Caco-2 (cell line): ENCODE measurements at regions of chr13 and their contacts with region 1.

Region 1: DNA sequence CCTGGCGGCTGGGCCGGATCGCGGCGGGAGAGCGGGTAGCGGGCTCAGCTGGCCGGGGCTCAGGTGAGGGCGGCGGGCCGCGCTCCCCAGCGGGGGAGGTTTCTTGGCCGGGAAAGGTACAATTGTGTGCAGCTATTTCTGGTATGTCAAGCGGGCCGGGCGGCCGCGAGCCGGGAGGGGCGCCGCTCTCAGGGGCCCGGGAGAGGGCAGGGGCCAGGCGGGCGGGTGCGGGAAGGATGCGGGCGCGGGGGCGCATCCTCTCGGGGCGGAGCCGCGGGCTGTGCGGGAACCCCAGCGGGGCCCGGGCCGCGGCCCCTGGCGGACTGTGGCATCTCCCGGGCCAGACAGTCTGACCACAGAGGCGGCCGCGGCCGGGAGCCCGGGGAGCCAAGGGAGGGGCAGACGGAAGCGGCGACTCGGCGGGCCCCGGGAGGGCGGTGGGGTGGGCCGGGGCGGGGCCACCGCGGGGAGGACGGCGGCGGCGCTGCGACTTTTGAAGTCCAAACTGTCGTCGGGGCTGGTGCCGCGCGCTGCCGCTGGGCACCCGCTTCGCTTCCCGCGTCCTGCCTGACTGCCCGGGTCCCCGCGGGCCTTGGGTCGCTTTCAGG is at the start of gene LMO7:
- DNase-seq: peak; percentile 84 to 88
- H3K4me3 ChIP-seq: peak within 1 kb of the TSS; percentile 57
- H3K4me3 Mint-ChIP-seq: peak within 1 kb of the TSS; percentile 78
- H3K27ac Mint-ChIP-seq: peak within 1 kb of the TSS; percentile 42
- H3K4me1 ChIP-seq: peaks cover 8% of the 10 kb centered on the region; the same call in 1 of the 2 replicates
- H3K4me1 Mint-ChIP-seq: peaks cover 16% of the 10 kb centered on the region
- H3K27me3 ChIP-seq: no peaks in the 10 kb centered on the region
- H3K27me3 Mint-ChIP-seq: no peaks in the 10 kb centered on the region
- CTCF ChIP-seq: no peak
- total RNA-seq, gene LMO7: 209 and 230 TPM in 2 replicates

Region 2: DNA sequence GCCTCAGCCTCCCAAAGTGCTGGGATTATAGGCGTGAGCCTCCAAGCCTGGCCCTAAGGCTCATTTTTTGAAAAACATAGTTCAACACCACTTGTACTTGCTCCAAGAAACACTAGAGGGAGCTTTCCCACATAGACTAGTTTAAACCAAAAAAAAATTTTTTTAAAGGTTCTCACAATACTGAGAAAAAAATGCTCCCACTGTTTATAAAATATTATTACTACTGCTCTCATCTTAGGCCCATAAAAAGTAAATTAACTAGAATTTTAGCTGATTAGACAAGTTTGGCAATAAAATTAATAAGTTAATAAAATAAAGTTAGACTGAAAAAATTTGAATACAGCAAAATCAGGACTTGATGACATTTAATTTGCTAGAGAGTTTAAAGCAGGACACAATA is 263.4 kb before region 1 on chr13:
- CTCF ChIA-PET with region 1: no interaction called
- POLR2A ChIA-PET with region 1: no interaction called
- intact Hi-C with region 1: loop called (anchors 10 kb)
- DNase-seq: peak in 1 of 2 experiments; percentile 59
- H3K4me3 ChIP-seq: no peak overlapping the region
- H3K4me3 Mint-ChIP-seq: no peak overlapping the region
- H3K27ac Mint-ChIP-seq: no peak overlapping the region
- H3K4me1 ChIP-seq: peaks cover 74% of the 10 kb centered on the region
- H3K4me1 Mint-ChIP-seq: peaks cover 46% of the 10 kb centered on the region
- H3K27me3 ChIP-seq: no peaks in the 10 kb centered on the region; the same call in 1 of the 2 replicates
- H3K27me3 Mint-ChIP-seq: no peaks in the 10 kb centered on the region
- CTCF ChIP-seq: peak; percentile 71 to 73